ENCODE measurements at regions of chr20 and their contacts with region 1.

Region 1: GRCh38 chr20:7285918-7286556 is 518.6 kb downstream of the BMP2 start:
- DNase-seq: peak; percentile 82
- ATAC-seq: peak; percentile 83 to 88

Region 2: DNA sequence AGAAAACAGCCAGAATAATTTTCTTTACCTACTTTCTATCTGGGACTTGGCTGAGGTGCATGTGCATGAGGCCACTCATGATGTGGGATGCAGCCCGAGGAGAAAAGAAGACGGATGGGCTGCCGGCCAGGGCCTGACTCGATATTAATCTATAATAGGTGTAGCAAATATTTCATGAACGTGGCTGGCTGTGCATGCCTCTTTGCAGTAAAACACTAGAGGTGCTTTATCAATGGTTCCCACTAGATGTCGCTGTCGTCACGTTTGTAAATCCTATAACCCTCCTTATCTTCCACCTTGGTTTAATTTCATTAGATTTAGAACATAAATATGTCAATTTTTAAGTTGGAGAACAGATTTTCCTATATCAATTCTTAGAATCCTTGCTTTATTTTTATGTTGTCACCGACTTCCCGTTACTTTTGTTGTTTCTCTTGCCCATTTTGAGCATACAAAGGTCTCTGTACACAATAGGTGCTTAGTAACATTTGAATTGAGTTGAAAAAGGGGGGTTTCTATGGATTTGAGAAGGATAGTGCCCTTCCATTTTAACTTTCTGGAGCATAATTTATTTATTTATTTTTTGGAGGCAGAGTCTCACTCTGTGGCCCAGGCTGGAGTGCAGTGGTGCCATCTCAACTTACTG is 1143.6 kb before region 1 on chr20:
- intact Hi-C with region 1: loop called in 1 of 2 experiments (anchors 5 kb)
- DNase-seq: peak; percentile 29
- ATAC-seq: peak; percentile 47 to 61

Region 3: GRCh38 chr20:6583134-6583738 is 702.8 kb before region 1 on chr20:
- intact Hi-C with region 1: loop called in 1 of 2 experiments (anchors 10 kb)
- DNase-seq: peak; percentile 53
- ATAC-seq: peak; percentile 78 to 87

Region 4: DNA sequence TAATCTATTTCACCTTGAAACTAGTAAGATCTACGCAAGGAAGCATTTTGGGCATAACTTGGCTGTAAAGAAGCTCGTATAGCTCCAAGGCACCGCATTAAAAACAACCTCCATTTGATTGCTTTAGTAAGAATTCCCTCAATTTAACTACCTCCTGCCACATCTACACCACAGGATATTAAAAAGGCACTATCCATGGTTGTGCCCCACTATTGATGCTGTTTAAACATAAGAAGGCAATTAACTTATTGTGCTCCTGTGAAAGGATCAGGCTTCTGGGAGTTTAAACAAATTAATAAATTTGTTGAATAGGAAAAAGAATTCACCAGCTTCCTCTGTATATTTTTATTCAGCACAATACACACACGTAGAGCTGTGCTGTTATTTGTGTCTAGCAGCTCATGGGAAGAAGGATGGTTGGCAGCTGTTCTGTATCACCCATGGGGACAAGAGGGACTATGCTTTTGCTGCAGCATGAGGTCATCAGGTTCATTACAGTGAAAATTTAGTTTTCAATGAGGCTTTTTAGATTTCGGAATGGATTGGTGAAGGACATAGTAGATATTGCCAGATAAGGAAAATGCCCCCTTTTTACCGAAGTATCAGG is 141.0 kb after region 1 on chr20:
- intact Hi-C with region 1: no loop called
- DNase-seq: no peak
- ATAC-seq: no peak

Measured in left cardiac atrium (tissue), 4 donors.